ENCODE measurements at regions of chr14 and their contacts with region 1.

Region 1: GRCh38 chr14:61750708-61751474 is 11.3 kb upstream of the SNAPC1 start:
- DNase-seq: peak; percentile 93 to 95
- H3K4me3 ChIP-seq: peak overlapping the region; percentile 67
- H3K27ac ChIP-seq: peak overlapping the region; percentile 89
- H3K4me1 ChIP-seq: peaks cover 88% of the 10 kb centered on the region
- H3K27me3 ChIP-seq: no peaks in the 10 kb centered on the region
- CTCF ChIP-seq: no peak

Region 2: GRCh38 chr14:60363275-60363674 is 1387.6 kb before region 1 on chr14:
- CTCF ChIA-PET with region 1: no interaction called
- POLR2A ChIA-PET with region 1: interaction called, 18 read pairs
- intact Hi-C with region 1: no loop called
- DNase-seq: no peak
- H3K4me3 ChIP-seq: no peak overlapping the region
- H3K27ac ChIP-seq: no peak overlapping the region
- H3K4me1 ChIP-seq: no peaks in the 10 kb centered on the region
- H3K27me3 ChIP-seq: no peaks in the 10 kb centered on the region
- CTCF ChIP-seq: no peak

Region 3: GRCh38 chr14:61271552-61271951 is 479.3 kb before region 1 on chr14:
- CTCF ChIA-PET with region 1: no interaction called
- POLR2A ChIA-PET with region 1: no interaction called
- intact Hi-C with region 1: no loop called
- DNase-seq: no peak
- H3K4me3 ChIP-seq: no peak overlapping the region
- H3K27ac ChIP-seq: no peak overlapping the region
- H3K4me1 ChIP-seq: no peaks in the 10 kb centered on the region
- H3K27me3 ChIP-seq: no peaks in the 10 kb centered on the region
- CTCF ChIP-seq: no peak

Region 4: GRCh38 chr14:61461808-61462275 is 289.0 kb before region 1 on chr14:
- CTCF ChIA-PET with region 1: no interaction called
- POLR2A ChIA-PET with region 1: no interaction called
- intact Hi-C with region 1: loop called (anchors 2 kb)
- DNase-seq: peak; percentile 48 to 70
- H3K4me3 ChIP-seq: no peak overlapping the region
- H3K27ac ChIP-seq: peak overlapping the region; percentile 66
- H3K4me1 ChIP-seq: peaks cover 56% of the 10 kb centered on the region
- H3K27me3 ChIP-seq: no peaks in the 10 kb centered on the region
- CTCF ChIP-seq: peak; percentile 93

Region 5: DNA sequence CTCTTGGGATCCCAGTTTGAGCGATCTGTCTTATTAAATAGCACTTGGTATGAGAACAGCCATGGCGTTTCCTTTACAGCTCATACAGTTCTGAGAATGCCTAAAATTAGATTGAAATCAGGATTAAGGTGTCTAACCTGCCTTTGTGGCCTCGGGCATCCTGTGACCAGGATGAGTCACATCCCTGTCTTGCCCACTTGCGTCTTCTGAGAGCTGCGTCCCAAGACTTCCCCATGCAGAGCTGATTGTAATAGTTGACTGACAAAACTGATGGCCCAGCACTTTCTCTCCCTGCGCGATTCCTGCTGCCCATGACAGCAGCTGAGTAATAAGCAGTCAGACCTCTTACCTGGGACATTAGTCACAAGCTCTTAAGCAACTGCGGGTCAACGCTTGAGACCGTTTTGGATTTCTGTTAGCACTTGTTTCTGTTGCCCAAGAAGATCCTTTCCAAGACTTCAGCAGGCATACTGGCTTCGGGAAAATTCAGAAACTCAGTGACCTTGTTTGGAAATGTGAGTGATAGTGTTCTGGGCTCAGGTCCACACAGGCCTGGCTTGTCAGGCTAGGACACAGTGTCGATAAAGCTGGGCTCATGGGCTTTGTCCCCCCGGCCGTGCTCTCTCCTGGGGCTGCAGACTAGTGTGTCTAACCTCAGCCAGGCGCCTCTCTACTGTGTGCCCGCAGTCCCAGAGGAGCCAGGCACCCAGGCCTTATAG is 225.4 kb before region 1 on chr14:
- CTCF ChIA-PET with region 1: no interaction called
- POLR2A ChIA-PET with region 1: no interaction called
- intact Hi-C with region 1: loop called (anchors 1 kb)
- DNase-seq: peak; percentile 94 to 100
- H3K4me3 ChIP-seq: peak overlapping the region; percentile 32; the same call in 1 of the 2 replicates
- H3K27ac ChIP-seq: peak overlapping the region; percentile 98
- H3K4me1 ChIP-seq: peaks cover 69% of the 10 kb centered on the region
- H3K27me3 ChIP-seq: no peaks in the 10 kb centered on the region
- CTCF ChIP-seq: no peak

Region 6: DNA sequence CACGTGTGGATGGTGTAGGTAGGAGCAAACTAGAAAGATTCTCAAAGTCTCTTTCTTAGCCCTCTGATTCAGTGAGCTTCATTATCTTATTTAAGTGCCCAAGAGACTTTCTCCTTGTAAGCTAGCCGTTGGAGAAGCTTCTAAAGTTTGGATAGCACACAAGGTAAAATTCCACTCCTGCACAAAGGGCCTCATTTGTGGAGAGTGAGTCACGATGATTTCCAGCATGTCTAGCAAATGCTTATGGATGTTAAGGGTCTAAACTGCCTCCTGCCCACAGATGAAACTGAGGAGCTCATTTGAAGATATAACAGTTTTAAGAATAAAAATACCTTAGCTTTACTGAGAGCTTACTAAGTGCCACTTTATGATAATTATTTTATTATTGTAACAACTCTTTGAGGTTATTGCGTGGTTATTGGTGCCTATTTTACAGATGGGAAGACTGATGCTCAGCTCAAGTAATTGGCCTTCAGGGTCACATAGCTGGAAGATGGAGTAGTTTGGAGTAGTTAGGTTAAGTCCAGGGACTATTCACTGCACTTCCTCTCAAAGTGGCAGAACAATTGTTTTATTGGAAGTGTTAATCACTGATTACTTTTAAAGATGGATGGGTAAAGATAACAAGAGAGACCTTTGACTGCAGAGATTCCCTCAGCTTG is 134.2 kb before region 1 on chr14:
- CTCF ChIA-PET with region 1: no interaction called
- POLR2A ChIA-PET with region 1: interaction called, 10 read pairs
- intact Hi-C with region 1: no loop called
- DNase-seq: peak in 1 of 2 experiments; percentile 83
- H3K4me3 ChIP-seq: no peak overlapping the region
- H3K27ac ChIP-seq: peak overlapping the region; percentile 74
- H3K4me1 ChIP-seq: peaks cover 37% of the 10 kb centered on the region
- H3K27me3 ChIP-seq: no peaks in the 10 kb centered on the region
- CTCF ChIP-seq: no peak

Region 7: DNA sequence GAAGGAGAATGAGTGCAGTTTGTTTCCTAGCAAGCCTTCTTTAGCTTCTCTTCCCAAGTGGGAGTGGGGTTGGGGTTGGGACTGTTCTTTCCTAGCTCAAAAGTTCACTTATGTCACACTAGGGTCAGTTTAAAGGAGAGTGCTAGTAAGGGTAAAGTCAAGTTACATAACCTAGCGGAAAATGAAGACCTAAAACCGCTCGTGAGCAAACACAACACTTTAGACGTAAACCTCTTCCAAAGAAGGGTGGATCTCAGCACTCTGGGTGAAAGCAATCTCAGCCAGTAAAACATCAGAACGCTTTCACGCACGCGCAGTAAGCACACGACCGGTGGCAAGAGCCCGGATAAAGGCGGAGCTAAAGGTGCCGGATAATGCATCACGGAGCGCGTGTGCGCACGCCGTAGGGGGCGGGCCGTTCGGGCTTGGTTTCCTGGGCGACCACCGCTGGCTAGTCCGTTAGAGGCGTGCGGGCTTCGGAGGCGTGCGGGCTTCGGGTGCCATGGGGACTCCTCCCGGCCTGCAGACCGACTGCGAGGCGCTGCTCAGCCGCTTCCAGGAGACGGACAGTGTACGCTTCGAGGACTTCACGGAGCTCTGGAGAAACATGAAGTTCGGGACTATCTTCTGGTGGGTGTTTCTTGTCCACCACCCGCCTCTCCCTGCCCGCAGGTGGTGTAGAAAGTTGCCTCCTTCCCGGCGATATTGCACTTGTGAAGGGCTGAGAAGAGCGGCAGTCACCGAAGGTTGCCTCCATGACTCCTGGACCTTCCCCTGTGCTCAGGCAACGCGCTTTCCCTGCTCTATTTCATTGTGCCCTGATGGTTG is 11.3 kb after region 1 on chr14 and contains the start of gene SNAPC1:
- CTCF ChIA-PET with region 1: no interaction called
- POLR2A ChIA-PET with region 1: interaction called, 22 read pairs
- intact Hi-C with region 1: loop called (anchors 1 kb)
- DNase-seq: peak; percentile 97
- H3K4me3 ChIP-seq: peak within 1 kb of the TSS; percentile 72
- H3K27ac ChIP-seq: peak within 1 kb of the TSS; percentile 72
- H3K4me1 ChIP-seq: peaks cover 40% of the 10 kb centered on the region
- H3K27me3 ChIP-seq: no peaks in the 10 kb centered on the region
- CTCF ChIP-seq: no peak
- total RNA-seq, gene SNAPC1: 17.9 and 18.0 TPM in 2 replicates

Region 8: GRCh38 chr14:61774861-61775260 is 24.0 kb after region 1 on chr14:
- CTCF ChIA-PET with region 1: no interaction called
- POLR2A ChIA-PET with region 1: no interaction called
- intact Hi-C with region 1: no loop called
- DNase-seq: no peak
- H3K4me3 ChIP-seq: no peak overlapping the region
- H3K27ac ChIP-seq: no peak overlapping the region
- H3K4me1 ChIP-seq: no peaks in the 10 kb centered on the region
- H3K27me3 ChIP-seq: no peaks in the 10 kb centered on the region
- CTCF ChIP-seq: no peak

Region 9: DNA sequence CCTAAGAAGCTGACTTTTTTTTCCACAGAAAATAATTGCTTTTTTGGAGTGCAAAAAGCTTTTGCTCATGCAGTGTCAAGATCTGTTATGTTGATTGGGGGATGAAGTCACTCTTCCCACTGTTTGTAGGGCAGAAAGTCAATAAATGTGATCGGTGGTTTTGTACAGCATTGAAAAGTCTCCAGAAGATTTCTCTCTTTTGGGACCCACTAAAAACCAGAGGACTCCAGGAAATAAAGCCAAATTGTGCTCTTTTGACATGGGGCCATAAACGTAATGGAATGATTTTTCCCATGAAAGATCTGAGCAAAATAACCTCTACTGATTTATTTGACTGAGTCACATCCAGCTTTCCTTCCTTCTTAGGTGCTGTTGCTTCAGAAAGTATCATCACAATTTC is 133.8 kb after region 1 on chr14:
- CTCF ChIA-PET with region 1: no interaction called
- POLR2A ChIA-PET with region 1: no interaction called
- intact Hi-C with region 1: no loop called
- DNase-seq: no peak
- H3K4me3 ChIP-seq: no peak overlapping the region
- H3K27ac ChIP-seq: no peak overlapping the region
- H3K4me1 ChIP-seq: peaks cover 18% of the 10 kb centered on the region
- H3K27me3 ChIP-seq: no peaks in the 10 kb centered on the region
- CTCF ChIP-seq: no peak

Region 10: GRCh38 chr14:61925043-61925442 is 174.2 kb after region 1 on chr14:
- CTCF ChIA-PET with region 1: no interaction called
- POLR2A ChIA-PET with region 1: no interaction called
- intact Hi-C with region 1: loop called (anchors 5 kb)
- DNase-seq: no peak
- H3K4me3 ChIP-seq: no peak overlapping the region
- H3K27ac ChIP-seq: no peak overlapping the region
- H3K4me1 ChIP-seq: peaks cover 47% of the 10 kb centered on the region
- H3K27me3 ChIP-seq: no peaks in the 10 kb centered on the region
- CTCF ChIP-seq: no peak

Region 11: GRCh38 chr14:62027958-62028357 is 277.1 kb after region 1 on chr14:
- CTCF ChIA-PET with region 1: no interaction called
- POLR2A ChIA-PET with region 1: no interaction called
- intact Hi-C with region 1: no loop called
- DNase-seq: no peak
- H3K4me3 ChIP-seq: no peak overlapping the region
- H3K27ac ChIP-seq: no peak overlapping the region
- H3K4me1 ChIP-seq: peaks cover 10% of the 10 kb centered on the region; the same call in 1 of the 2 replicates
- H3K27me3 ChIP-seq: no peaks in the 10 kb centered on the region
- CTCF ChIP-seq: no peak